Gastrocnemius medialis (tissue), 4 donors: ENCODE measurements at regions of chr1 and their contacts with region 1.

Region 1: GRCh38 chr1:45359882-45360513 is 19.8 kb upstream of the MUTYH start:
- DNase-seq: peak; percentile 56 to 70
- ATAC-seq: peak; percentile 76 to 77
- H3K4me3 ChIP-seq: peak overlapping the region in 2 of 4 donors; percentile 27 to 29
- H3K27ac ChIP-seq: peak overlapping the region; percentile 84 to 89 (median 86)
- H3K4me1 ChIP-seq: peaks cover 31 to 33% of the 10 kb centered on the region in 2 donors
- H3K27me3 ChIP-seq: no peaks in the 10 kb centered on the region
- CTCF ChIP-seq: peak; percentile 67 to 76 (median 71)
- POLR2A ChIP-seq: no peak

Region 2: DNA sequence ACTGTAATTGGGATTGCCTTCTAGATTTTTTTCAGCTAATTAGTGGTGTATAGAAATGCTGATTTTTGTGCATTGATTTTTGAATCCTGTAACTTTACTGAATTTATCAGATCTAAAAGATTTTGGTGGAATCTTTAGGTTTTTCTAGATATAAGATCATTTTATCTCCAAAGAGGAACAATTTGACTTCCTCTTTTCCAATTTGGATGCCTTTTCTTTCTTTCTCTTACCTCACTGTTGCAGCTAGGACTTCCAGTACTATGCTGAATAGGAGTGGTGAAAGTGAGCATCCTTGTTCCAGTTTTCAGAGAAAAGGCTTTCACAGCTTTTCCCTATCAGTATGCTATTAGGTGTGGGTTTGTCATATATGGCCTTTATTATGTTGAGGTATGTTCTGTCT is 77.3 kb after region 1 on chr1:
- in situ Hi-C with region 1: no loop called
- intact Hi-C with region 1: loop called (anchors 5 kb)
- DNase-seq: no peak
- ATAC-seq: no peak
- H3K4me3 ChIP-seq: no peak overlapping the region
- H3K27ac ChIP-seq: peak overlapping the region in 1 of 4 donors; percentile 15
- H3K4me1 ChIP-seq: peaks cover 0 to 15% of the 10 kb centered on the region in 2 donors
- H3K27me3 ChIP-seq: no peaks in the 10 kb centered on the region
- CTCF ChIP-seq: no peak
- POLR2A ChIP-seq: no peak

Region 3: GRCh38 chr1:45490626-45491486 is 130.9 kb after region 1 on chr1 and contains the start of gene TESK2:
- in situ Hi-C with region 1: loop called (anchors 5 kb)
- intact Hi-C with region 1: loop called (anchors 1 kb)
- DNase-seq: peak; percentile 98 to 99
- ATAC-seq: peak; percentile 95 to 98
- H3K4me3 ChIP-seq: peak within 1 kb of the TSS; percentile 68 to 99 (median 90)
- H3K27ac ChIP-seq: peak within 1 kb of the TSS; percentile 87 to 96 (median 92)
- H3K4me1 ChIP-seq: peaks cover 14 to 19% of the 10 kb centered on the region in 2 donors
- H3K27me3 ChIP-seq: no peaks in the 10 kb centered on the region
- CTCF ChIP-seq: peak in 4 of 5 experiments; percentile 27 to 56 (median 30)
- POLR2A ChIP-seq: peak; percentile 89 to 92
- total RNA-seq, gene TESK2: 3.4 to 5.8 (median 4.5) TPM

Region 4: DNA sequence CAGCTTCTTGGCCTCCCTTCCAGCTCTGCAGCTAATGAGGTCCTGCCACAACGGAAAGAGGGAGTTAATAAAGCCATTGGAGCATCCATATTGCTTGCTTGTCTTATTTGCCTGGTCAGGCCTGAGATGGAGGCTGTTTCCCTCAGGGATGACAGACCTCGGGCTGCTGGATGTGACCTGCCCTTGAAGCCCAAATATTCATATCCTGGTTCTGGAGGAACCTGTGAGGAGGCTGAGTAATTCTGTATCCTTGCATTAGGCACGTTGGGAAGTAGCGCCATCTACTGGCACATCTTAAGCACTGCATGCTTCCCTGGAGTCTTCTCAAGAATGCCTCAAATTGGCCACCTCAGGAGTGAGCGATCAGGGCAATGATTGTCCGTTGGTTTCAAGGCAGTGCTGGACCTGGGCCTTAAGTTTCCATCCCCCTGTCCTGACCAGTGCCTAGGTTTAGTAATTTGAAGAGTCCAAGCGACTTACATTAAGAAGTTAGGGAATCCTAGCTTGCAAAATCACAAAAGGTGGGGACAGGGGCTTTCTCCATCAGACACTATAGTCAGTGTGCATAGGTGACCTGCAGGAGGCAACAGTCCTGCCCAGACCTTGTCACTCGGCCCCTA is 210.1 kb after region 1 on chr1:
- in situ Hi-C with region 1: loop called in 3 of 4 experiments (anchors 10 kb)
- intact Hi-C with region 1: loop called (anchors 1 kb)
- DNase-seq: peak; percentile 30 to 69
- ATAC-seq: peak; percentile 93 to 94
- H3K4me3 ChIP-seq: no peak overlapping the region
- H3K27ac ChIP-seq: no peak overlapping the region
- H3K4me1 ChIP-seq: peaks cover 0 to 5% of the 10 kb centered on the region in 2 donors
- H3K27me3 ChIP-seq: no peaks in the 10 kb centered on the region
- CTCF ChIP-seq: peak; percentile 91 to 99 (median 93)
- POLR2A ChIP-seq: no peak